Endothelial cell of umbilical vein (primary cell): ENCODE measurements at regions of chr2 and their contacts with region 1.

Region 1: GRCh38 chr2:127591221-127591923 is 54.6 kb upstream of the GPR17 start:
- DNase-seq: peak; percentile 66
- H3K4me3 ChIP-seq: no peak overlapping the region
- H3K27ac ChIP-seq: no peak overlapping the region
- H3K4me1 ChIP-seq: no peaks in the 10 kb centered on the region
- H3K27me3 ChIP-seq: no peaks in the 10 kb centered on the region
- CTCF ChIP-seq: peak; percentile 94 to 99
- POLR2A ChIP-seq: no peak

Region 2: GRCh38 chr2:127563458-127564428 is 27.6 kb before region 1 on chr2:
- CTCF ChIA-PET with region 1: interaction called, 32 read pairs
- POLR2A ChIA-PET with region 1: no interaction called
- dilution Hi-C with region 1: no loop called
- intact Hi-C with region 1: no loop called
- DNase-seq: no peak
- H3K4me3 ChIP-seq: no peak overlapping the region
- H3K27ac ChIP-seq: no peak overlapping the region
- H3K4me1 ChIP-seq: no peaks in the 10 kb centered on the region
- H3K27me3 ChIP-seq: peaks cover 5 to 8% of the 10 kb centered on the region in 2 experiments
- CTCF ChIP-seq: no peak
- POLR2A ChIP-seq: no peak

Region 3: GRCh38 chr2:127637725-127638252 is 46.4 kb after region 1 on chr2:
- CTCF ChIA-PET with region 1: interaction called, 77 read pairs
- POLR2A ChIA-PET with region 1: no interaction called
- dilution Hi-C with region 1: no loop called
- intact Hi-C with region 1: loop called (anchors 1 kb)
- DNase-seq: peak; percentile 70
- H3K4me3 ChIP-seq: no peak overlapping the region
- H3K27ac ChIP-seq: peak overlapping the region; percentile 92
- H3K4me1 ChIP-seq: peaks cover 34% of the 10 kb centered on the region
- H3K27me3 ChIP-seq: no peaks in the 10 kb centered on the region
- CTCF ChIP-seq: no peak
- POLR2A ChIP-seq: peak; percentile 84

Region 4: DNA sequence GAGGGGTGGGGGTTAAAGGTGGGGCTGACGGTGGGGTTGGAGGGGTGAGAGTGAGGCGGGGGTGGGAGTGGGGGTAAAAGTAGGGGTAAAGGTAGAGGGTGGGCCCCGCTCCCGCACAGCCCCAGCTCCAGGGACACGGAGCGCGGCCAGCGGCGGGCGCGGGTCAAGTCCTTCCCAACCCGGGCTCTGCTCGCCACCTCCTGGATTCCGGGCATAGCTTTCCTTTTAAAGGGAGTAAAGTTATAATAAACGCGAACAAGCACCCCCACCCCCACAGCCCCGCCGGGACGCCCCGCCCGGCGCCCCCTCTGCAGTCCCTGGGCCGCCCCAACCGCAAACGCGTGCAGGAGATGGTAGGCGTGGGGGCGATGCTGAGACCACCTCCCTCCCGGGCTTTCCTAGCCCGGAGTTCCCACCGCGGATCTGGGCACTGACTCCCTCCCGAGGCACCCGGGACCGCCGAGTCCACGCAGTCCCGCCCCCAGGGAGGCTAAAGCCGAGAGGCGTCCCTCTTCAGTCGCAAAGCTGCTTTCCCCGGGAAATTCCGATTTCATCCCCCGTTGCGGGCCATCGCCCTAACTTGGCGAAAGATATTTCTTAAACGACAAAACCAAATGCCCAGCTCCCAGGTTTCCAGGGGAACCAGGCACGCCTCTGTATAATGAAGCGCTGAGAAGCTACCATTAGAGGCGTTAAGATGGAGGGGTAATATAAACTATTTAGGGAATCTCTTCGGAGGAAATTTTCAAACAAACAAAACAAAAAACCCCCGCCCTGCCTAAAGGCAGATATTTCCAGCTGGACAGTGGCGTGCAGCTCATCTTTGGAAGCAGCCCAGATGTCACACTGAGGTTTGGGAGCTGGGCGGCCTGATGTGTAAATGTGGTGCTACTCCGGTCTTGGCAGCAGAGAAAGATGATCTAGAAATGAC is 84.2 kb after region 1 on chr2 and contains the start of gene LIMS2:
- CTCF ChIA-PET with region 1: interaction called, 151 read pairs
- POLR2A ChIA-PET with region 1: no interaction called
- dilution Hi-C with region 1: no loop called
- intact Hi-C with region 1: loop called (anchors 1 kb)
- DNase-seq: peak; percentile 36
- H3K4me3 ChIP-seq: peak within 1 kb of the TSS; percentile 48 to 58 (median 58)
- H3K27ac ChIP-seq: no peak within 1 kb of the TSS
- H3K4me1 ChIP-seq: peaks cover 18% of the 10 kb centered on the region
- H3K27me3 ChIP-seq: no peaks in the 10 kb centered on the region
- CTCF ChIP-seq: peak in 1 of 2 donors; percentile 37
- POLR2A ChIP-seq: no peak
- total RNA-seq, gene LIMS2: 45.7 and 48.3 TPM in 2 replicates

Region 5: DNA sequence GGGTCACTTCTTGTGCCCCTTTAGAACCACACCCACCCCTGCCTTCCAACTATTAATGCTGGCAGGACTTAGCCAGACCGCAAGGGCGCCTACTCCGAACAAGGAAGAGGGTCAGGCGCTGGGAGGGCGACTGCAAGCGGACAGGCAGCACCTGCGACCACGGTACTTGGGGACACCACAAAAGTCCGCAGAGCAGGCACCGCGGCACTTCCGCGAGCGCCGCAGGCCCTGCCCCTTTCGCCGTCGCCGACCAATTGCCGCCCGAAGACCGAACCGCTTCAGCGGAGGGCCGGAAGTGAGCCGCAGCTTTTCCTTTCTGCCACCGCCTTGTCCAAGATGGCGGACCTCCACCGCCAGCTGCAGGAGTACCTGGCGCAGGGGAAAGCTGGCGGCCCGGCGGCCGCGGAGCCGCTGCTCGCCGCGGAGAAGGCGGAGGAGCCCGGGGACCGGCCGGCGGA is 109.8 kb after region 1 on chr2 and contains the start of gene SFT2D3:
- CTCF ChIA-PET with region 1: interaction called, 162 read pairs
- POLR2A ChIA-PET with region 1: interaction called, 5 read pairs
- dilution Hi-C with region 1: no loop called
- intact Hi-C with region 1: loop called (anchors 2 kb)
- DNase-seq: peak; percentile 91
- H3K4me3 ChIP-seq: peak within 1 kb of the TSS; percentile 40 to 79 (median 45)
- H3K27ac ChIP-seq: peak within 1 kb of the TSS; percentile 85
- H3K4me1 ChIP-seq: peaks cover 17% of the 10 kb centered on the region
- H3K27me3 ChIP-seq: no peaks in the 10 kb centered on the region
- CTCF ChIP-seq: no peak
- POLR2A ChIP-seq: peak; percentile 99
- total RNA-seq, gene SFT2D3: 4.4 and 4.7 TPM in 2 replicates

Region 6: DNA sequence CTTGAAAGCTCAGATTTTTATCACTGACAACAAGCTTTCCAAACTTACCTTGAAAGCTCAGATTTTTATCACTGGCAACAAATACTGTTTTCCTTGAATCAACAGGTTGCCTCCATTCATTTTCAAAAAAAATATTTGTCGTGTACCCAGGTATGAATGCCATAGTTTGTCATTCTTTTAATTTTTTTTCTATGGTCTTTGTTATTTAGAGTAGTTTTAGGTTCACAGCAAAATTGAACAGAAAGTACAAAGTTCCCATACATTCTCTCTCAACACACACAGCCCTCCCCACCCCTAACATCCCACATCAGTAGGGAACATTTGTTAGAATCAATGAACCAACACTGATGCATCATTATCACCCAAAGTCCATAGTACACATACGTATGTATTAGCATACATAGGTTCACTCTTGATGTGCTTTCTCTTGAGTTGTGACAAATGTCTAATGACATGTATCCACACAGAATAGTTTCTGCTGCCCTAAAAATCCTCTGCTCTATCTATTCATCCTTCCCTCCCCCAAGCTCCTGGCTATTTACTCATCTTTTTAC is 193.7 kb after region 1 on chr2:
- CTCF ChIA-PET with region 1: no interaction called
- POLR2A ChIA-PET with region 1: no interaction called
- dilution Hi-C with region 1: no loop called
- intact Hi-C with region 1: no loop called
- DNase-seq: no peak
- H3K4me3 ChIP-seq: no peak overlapping the region
- H3K27ac ChIP-seq: no peak overlapping the region
- H3K4me1 ChIP-seq: no peaks in the 10 kb centered on the region
- H3K27me3 ChIP-seq: no peaks in the 10 kb centered on the region
- CTCF ChIP-seq: no peak
- POLR2A ChIP-seq: no peak

Region 7: DNA sequence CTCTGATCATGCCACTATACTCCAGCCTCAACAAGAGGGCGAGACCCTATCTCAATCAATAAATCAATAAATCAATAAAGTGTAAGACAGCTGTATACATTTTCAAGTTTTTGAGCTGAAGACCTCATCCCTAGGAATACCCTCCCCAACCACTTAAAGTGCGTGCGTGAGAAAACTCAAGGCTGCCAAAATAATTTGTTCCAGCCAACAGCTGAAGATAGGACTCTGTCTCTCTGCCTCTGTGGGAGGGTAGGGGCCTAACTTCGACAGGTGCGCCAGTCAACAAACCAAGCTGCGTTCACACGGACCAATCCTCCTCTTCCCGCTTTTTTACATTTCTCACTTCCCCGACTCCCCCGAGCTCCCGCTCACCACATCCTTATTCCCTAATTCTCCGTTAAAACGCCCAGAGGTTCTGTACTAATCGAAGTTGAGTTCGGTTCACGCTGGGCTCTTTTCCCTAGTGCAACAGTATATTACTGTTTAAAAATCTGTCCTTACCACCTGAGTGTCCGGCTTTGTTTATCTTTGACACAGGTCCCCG is 266.0 kb after region 1 on chr2:
- CTCF ChIA-PET with region 1: interaction called, 10 read pairs
- POLR2A ChIA-PET with region 1: no interaction called
- dilution Hi-C with region 1: no loop called
- intact Hi-C with region 1: loop called (anchors 10 kb)
- DNase-seq: no peak
- H3K4me3 ChIP-seq: peak overlapping the region; percentile 97 to 99 (median 98)
- H3K27ac ChIP-seq: peak overlapping the region; percentile 55
- H3K4me1 ChIP-seq: peaks cover 7% of the 10 kb centered on the region
- H3K27me3 ChIP-seq: no peaks in the 10 kb centered on the region
- CTCF ChIP-seq: no peak
- POLR2A ChIP-seq: no peak

Region 8: GRCh38 chr2:128134573-128134972 is 543.2 kb after region 1 on chr2:
- CTCF ChIA-PET with region 1: no interaction called
- POLR2A ChIA-PET with region 1: no interaction called
- dilution Hi-C with region 1: no loop called
- intact Hi-C with region 1: no loop called
- DNase-seq: no peak
- H3K4me3 ChIP-seq: no peak overlapping the region
- H3K27ac ChIP-seq: no peak overlapping the region
- H3K4me1 ChIP-seq: no peaks in the 10 kb centered on the region
- H3K27me3 ChIP-seq: no peaks in the 10 kb centered on the region
- CTCF ChIP-seq: no peak
- POLR2A ChIP-seq: no peak